Adrenal gland (tissue), 19 donors: ENCODE measurements at regions of chr20 and their contacts with region 1.

Region 1: GRCh38 chr20:49853640-49854039 is 41.0 kb downstream of the SLC9A8 start:
- DNase-seq: peak; percentile 67 to 95 (median 85)
- H3K4me3 ChIP-seq: no peak overlapping the region
- H3K27ac ChIP-seq: peak overlapping the region in 4 of 5 donors; percentile 38 to 59 (median 55)
- H3K4me1 ChIP-seq: no peaks in the 10 kb centered on the region
- H3K27me3 ChIP-seq: no peaks in the 10 kb centered on the region
- CTCF ChIP-seq: no peak
- POLR2A ChIP-seq: no peak

Region 2: GRCh38 chr20:49541733-49542513 is 311.7 kb before region 1 on chr20:
- intact Hi-C with region 1: loop called in 1 of 2 experiments (anchors 10 kb)
- DNase-seq: peak; percentile 54 to 86 (median 67)
- H3K4me3 ChIP-seq: no peak overlapping the region
- H3K27ac ChIP-seq: no peak overlapping the region
- H3K4me1 ChIP-seq: no peaks in the 10 kb centered on the region
- H3K27me3 ChIP-seq: peaks cover 4% of the 10 kb centered on the region
- CTCF ChIP-seq: peak; percentile 64 to 98 (median 90)
- POLR2A ChIP-seq: no peak